AG04450 (cell line): ENCODE measurements at regions of chr17 and their contacts with region 1.

Region 1: GRCh38 chr17:38454516-38454915 is 26.3 kb downstream of the ARHGAP23 start:
- DNase-seq: no peak
- H3K4me3 ChIP-seq: peak overlapping the region; percentile 74
- H3K27ac ChIP-seq: peak overlapping the region; percentile 52
- H3K27me3 ChIP-seq: no peaks in the 10 kb centered on the region
- CTCF ChIP-seq: no peak

Region 2: DNA sequence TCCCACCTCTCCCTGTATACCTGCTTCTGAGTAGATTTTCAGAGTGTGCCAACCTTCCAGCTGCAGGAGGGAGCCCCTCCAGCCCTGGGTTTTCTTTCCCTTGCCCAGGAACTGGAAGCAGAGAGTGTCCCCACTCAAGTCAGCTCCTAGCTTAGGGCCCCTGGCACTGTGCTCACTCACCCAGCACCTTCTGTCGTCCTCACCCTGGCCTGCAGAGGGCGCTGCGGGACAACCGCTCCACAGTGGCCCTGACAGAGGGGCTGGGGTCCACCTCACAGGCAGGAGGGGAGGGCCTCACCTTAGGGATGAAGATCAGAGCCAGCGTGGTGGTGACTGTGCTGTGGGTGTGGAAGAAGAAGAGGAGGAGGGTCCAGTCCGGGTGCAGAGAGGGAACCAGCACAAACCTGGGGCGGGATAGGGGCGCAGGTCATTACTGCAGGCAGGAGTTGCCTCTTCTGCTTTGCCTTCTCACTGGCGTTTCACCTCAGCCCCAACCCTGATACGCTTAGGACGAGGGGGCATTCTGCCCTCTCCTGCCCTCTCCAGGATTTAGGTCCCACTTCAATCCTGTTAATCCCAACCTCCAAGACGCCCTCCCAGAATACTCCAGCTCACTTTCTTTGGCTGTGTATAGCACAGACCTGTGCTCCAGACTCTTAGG is 120.8 kb before region 1 on chr17:
- CTCF ChIA-PET with region 1: no interaction called
- POLR2A ChIA-PET with region 1: no interaction called
- DNase-seq: no peak
- H3K4me3 ChIP-seq: no peak overlapping the region
- H3K27ac ChIP-seq: no peak overlapping the region
- H3K27me3 ChIP-seq: peaks cover 48% of the 10 kb centered on the region
- CTCF ChIP-seq: peak; percentile 60

Region 3: GRCh38 chr17:38361694-38362465 is 92.6 kb before region 1 on chr17:
- CTCF ChIA-PET with region 1: no interaction called
- POLR2A ChIA-PET with region 1: no interaction called
- DNase-seq: no peak
- H3K4me3 ChIP-seq: no peak overlapping the region
- H3K27ac ChIP-seq: no peak overlapping the region
- H3K27me3 ChIP-seq: no peaks in the 10 kb centered on the region
- CTCF ChIP-seq: no peak

Region 4: DNA sequence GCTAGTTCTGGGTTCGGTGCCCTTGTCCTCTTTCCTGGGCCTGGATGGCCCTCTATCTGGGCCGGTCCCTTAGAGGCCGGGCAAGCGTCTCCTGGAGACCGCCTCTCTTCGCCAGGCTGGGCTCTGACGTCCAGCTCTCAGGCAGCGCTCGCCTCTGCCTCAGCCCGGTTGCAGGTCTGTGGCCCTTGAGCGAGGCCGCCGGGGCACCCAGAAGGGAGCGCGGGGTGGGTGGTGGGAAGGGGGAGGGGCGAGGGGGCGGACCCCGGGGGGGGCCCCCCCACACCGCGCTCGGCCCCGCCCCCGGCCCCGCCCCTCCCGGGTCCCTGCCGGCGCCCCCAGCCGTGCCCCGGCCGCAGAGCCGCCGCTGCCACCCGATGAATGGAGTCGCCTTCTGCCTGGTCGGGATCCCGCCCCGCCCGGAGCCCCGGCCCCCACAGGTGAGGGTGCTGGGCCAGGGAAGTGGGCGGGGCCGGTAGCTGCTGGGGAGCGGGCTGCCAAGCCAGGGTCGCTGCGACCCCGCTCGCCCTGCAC is 26.3 kb before region 1 on chr17 and contains the start of gene ARHGAP23:
- CTCF ChIA-PET with region 1: interaction called, 5 read pairs
- POLR2A ChIA-PET with region 1: interaction called, 15 read pairs
- DNase-seq: peak; percentile 47
- H3K4me3 ChIP-seq: peak within 1 kb of the TSS; percentile 76
- H3K27ac ChIP-seq: peak within 1 kb of the TSS; percentile 77
- H3K27me3 ChIP-seq: no peaks in the 10 kb centered on the region
- CTCF ChIP-seq: no peak
- polyA plus RNA-seq, gene ARHGAP23: 14.1 and 19.3 TPM in 2 replicates

Region 5: GRCh38 chr17:38464723-38465390 is 10.3 kb after region 1 on chr17:
- CTCF ChIA-PET with region 1: interaction called, 5 read pairs
- POLR2A ChIA-PET with region 1: interaction called, 41 read pairs
- DNase-seq: peak; percentile 83
- H3K4me3 ChIP-seq: peak overlapping the region; percentile 68
- H3K27ac ChIP-seq: peak overlapping the region; percentile 96
- H3K27me3 ChIP-seq: no peaks in the 10 kb centered on the region
- CTCF ChIP-seq: no peak

Region 6: DNA sequence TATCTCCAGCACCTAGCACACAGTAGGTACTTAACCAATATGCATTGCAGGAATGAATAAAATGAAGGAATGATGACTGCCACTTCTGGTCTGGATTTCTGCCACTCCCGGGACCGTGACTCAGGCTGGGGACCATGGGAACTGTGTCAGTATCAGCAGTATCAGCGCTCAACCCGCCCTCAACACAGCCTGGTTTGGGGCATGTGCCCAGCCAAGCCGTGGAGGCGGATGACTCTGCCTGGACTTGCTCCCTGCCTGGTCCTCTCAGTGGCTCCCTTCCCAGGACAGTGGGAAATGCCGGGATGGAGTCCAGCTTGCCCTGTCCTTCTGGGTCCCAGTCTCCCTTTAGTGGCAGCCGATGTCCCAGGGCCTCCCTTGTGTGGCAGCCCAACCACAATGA is 96.1 kb after region 1 on chr17:
- CTCF ChIA-PET with region 1: no interaction called
- POLR2A ChIA-PET with region 1: no interaction called
- DNase-seq: no peak
- H3K4me3 ChIP-seq: no peak overlapping the region
- H3K27ac ChIP-seq: no peak overlapping the region
- H3K27me3 ChIP-seq: peaks cover 37% of the 10 kb centered on the region
- CTCF ChIP-seq: no peak